BJ (cell line): ENCODE measurements at regions of chr11 and their contacts with region 1.

Region 1: GRCh38 chr11:61315260-61315659 is 17.6 kb downstream of the DDB1 start:
- DNase-seq: no peak
- H3K4me3 ChIP-seq: no peak overlapping the region
- H3K27me3 ChIP-seq: no peaks in the 10 kb centered on the region
- CTCF ChIP-seq: no peak

Region 2: DNA sequence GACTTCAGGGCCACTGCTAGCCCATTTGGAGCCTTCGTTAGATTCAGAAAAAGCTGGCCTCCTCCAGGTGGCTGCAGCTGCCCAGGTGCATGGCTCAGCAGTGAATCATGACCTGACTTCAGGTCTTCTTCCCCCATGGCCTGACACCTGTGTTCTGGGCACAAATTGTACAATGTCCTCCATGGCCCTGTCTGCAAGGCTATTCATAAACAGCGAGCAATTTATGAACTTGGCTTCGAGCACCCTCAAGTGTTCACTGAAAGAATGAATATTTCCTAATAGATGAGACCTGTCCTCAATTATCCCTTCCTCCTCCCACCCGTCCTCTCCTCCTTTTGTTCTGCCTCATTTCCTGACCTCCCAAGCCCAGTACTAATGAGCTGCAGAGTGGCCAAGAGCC is 141.8 kb before region 1 on chr11:
- CTCF ChIA-PET with region 1: no interaction called
- POLR2A ChIA-PET with region 1: no interaction called
- DNase-seq: no peak
- H3K4me3 ChIP-seq: no peak overlapping the region
- H3K27me3 ChIP-seq: peaks cover 10% of the 10 kb centered on the region
- CTCF ChIP-seq: peak; percentile 24

Region 3: GRCh38 chr11:61294717-61295595 is 20.3 kb before region 1 on chr11 and contains the start of gene VWCE:
- CTCF ChIA-PET with region 1: interaction called, 3 read pairs
- POLR2A ChIA-PET with region 1: interaction called, 13 read pairs
- DNase-seq: no peak
- H3K4me3 ChIP-seq: peak within 1 kb of the TSS; percentile 44
- H3K27me3 ChIP-seq: no peaks in the 10 kb centered on the region
- CTCF ChIP-seq: peak; percentile 49
- polyA plus RNA-seq, gene VWCE: 0.96 and 1.4 TPM in 2 replicates